ENCODE measurements at regions of chr2 and their contacts with region 1.

Region 1: GRCh38 chr2:19140596-19141219 is 217.7 kb downstream of the OSR1 start:
- DNase-seq: peak; percentile 91 to 92
- H3K4me3 ChIP-seq: no peak overlapping the region
- H3K4me3 Mint-ChIP-seq: peak overlapping the region; percentile 21
- H3K27ac Mint-ChIP-seq: peak overlapping the region; percentile 79
- H3K4me1 ChIP-seq: peaks cover 27% of the 10 kb centered on the region
- H3K4me1 Mint-ChIP-seq: peaks cover 22% of the 10 kb centered on the region
- H3K27me3 ChIP-seq: no peaks in the 10 kb centered on the region
- H3K27me3 Mint-ChIP-seq: no peaks in the 10 kb centered on the region
- CTCF ChIP-seq: no peak

Region 2: GRCh38 chr2:18749912-18750526 is 390.7 kb before region 1 on chr2:
- CTCF ChIA-PET with region 1: interaction called, 3 read pairs
- POLR2A ChIA-PET with region 1: no interaction called
- intact Hi-C with region 1: loop called (anchors 2 kb)
- DNase-seq: peak in 1 of 2 experiments; percentile 69
- H3K4me3 ChIP-seq: no peak overlapping the region
- H3K4me3 Mint-ChIP-seq: no peak overlapping the region
- H3K27ac Mint-ChIP-seq: no peak overlapping the region
- H3K4me1 ChIP-seq: no peaks in the 10 kb centered on the region
- H3K4me1 Mint-ChIP-seq: no peaks in the 10 kb centered on the region
- H3K27me3 ChIP-seq: no peaks in the 10 kb centered on the region
- H3K27me3 Mint-ChIP-seq: peaks cover 8% of the 10 kb centered on the region
- CTCF ChIP-seq: peak; percentile 73 to 84

Region 3: DNA sequence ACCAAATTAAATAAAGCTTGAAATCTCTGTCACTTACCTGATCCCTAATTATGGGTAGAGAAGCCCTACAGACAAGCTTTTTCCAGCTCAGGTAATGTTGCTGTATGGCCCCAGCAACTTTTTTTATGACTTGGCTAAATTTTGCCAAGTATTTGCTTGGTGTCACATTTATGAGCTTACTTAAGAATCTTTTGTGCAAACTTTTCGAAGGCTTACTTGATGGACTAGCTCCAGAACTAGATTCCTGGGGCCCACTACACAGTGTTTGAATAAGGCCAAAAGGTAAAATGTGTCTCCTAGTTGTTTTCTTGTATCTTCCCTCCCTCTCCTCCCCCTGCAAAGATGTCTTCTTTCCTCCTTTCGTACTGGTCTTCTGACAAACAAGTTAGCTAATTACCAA is 40.1 kb before region 1 on chr2:
- CTCF ChIA-PET with region 1: no interaction called
- POLR2A ChIA-PET with region 1: no interaction called
- intact Hi-C with region 1: loop called (anchors 1 kb)
- DNase-seq: peak in 1 of 2 experiments; percentile 35
- H3K4me3 ChIP-seq: no peak overlapping the region
- H3K4me3 Mint-ChIP-seq: no peak overlapping the region
- H3K27ac Mint-ChIP-seq: no peak overlapping the region
- H3K4me1 ChIP-seq: peaks cover 17% of the 10 kb centered on the region; the same call in 1 of the 2 replicates
- H3K4me1 Mint-ChIP-seq: peaks cover 30% of the 10 kb centered on the region
- H3K27me3 ChIP-seq: no peaks in the 10 kb centered on the region
- H3K27me3 Mint-ChIP-seq: no peaks in the 10 kb centered on the region
- CTCF ChIP-seq: no peak

Region 4: GRCh38 chr2:19176955-19177354 is 36.2 kb after region 1 on chr2:
- CTCF ChIA-PET with region 1: no interaction called
- POLR2A ChIA-PET with region 1: no interaction called
- intact Hi-C with region 1: loop called (anchors 2 kb)
- DNase-seq: no peak
- H3K4me3 ChIP-seq: no peak overlapping the region
- H3K4me3 Mint-ChIP-seq: no peak overlapping the region
- H3K27ac Mint-ChIP-seq: no peak overlapping the region
- H3K4me1 ChIP-seq: no peaks in the 10 kb centered on the region
- H3K4me1 Mint-ChIP-seq: no peaks in the 10 kb centered on the region
- H3K27me3 ChIP-seq: no peaks in the 10 kb centered on the region
- H3K27me3 Mint-ChIP-seq: no peaks in the 10 kb centered on the region
- CTCF ChIP-seq: no peak

Region 5: GRCh38 chr2:19347619-19348562 is 207.2 kb after region 1 on chr2:
- CTCF ChIA-PET with region 1: no interaction called
- POLR2A ChIA-PET with region 1: interaction called, 3 read pairs
- intact Hi-C with region 1: loop called (anchors 2 kb)
- DNase-seq: peak; percentile 97 to 98
- H3K4me3 ChIP-seq: peak overlapping the region; percentile 88
- H3K4me3 Mint-ChIP-seq: peak overlapping the region; percentile 98
- H3K27ac Mint-ChIP-seq: peak overlapping the region; percentile 98
- H3K4me1 ChIP-seq: no peaks in the 10 kb centered on the region
- H3K4me1 Mint-ChIP-seq: no peaks in the 10 kb centered on the region
- H3K27me3 ChIP-seq: no peaks in the 10 kb centered on the region
- H3K27me3 Mint-ChIP-seq: no peaks in the 10 kb centered on the region
- CTCF ChIP-seq: no peak